Gastrocnemius medialis (tissue), 4 donors: ENCODE measurements at regions of chr12 and their contacts with region 1.

Region 1: GRCh38 chr12:47837190-47838171 is 17.8 kb upstream of the HDAC7 start:
- DNase-seq: peak in 1 of 2 donors; percentile 56
- ATAC-seq: peak; percentile 68 to 84
- H3K4me3 ChIP-seq: no peak overlapping the region
- H3K27ac ChIP-seq: no peak overlapping the region
- H3K4me1 ChIP-seq: peaks cover 17 to 28% of the 10 kb centered on the region in 2 donors
- H3K27me3 ChIP-seq: no peaks in the 10 kb centered on the region
- CTCF ChIP-seq: peak; percentile 90 to 95 (median 92)
- POLR2A ChIP-seq: no peak

Region 2: GRCh38 chr12:47651368-47652254 is 185.9 kb before region 1 on chr12:
- in situ Hi-C with region 1: no loop called
- intact Hi-C with region 1: loop called (anchors 1 kb)
- DNase-seq: peak; percentile 19 to 32
- ATAC-seq: peak; percentile 77 to 85
- H3K4me3 ChIP-seq: peak overlapping the region in 3 of 4 donors; percentile 8 to 13 (median 10)
- H3K27ac ChIP-seq: no peak overlapping the region
- H3K4me1 ChIP-seq: no peaks in the 10 kb centered on the region
- H3K27me3 ChIP-seq: no peaks in the 10 kb centered on the region
- CTCF ChIP-seq: peak; percentile 49 to 74 (median 54)
- POLR2A ChIP-seq: no peak

Region 3: DNA sequence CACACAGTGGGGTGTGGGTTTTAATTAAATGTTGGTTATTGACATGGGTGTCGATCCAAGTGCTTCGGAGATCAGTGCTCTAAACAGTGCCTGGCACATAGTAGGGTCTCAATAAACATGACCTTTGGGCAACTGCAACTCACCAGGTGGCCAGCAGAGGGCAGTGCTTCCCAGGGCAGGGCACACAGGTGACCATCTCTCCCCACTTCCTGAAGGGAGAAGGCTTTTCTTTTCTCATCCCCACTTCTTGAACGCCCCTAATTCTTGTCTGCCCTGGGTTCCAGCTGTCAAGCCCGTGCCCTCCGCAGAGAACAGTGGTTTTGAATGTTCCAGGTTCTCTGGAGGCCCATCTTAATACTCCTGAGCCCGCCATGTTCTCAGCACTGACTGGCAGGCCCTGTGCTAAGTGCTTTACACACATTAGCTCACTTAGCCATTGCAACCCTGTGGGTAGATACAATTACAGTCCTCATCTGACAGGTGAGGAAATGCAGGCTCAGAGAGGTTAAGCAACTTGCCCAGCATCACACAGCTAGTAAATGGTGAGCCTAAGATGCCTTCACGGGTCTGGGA is 95.1 kb before region 1 on chr12:
- in situ Hi-C with region 1: loop called in 2 of 4 experiments (anchors 25 kb)
- intact Hi-C with region 1: loop called (anchors 1 kb)
- DNase-seq: no peak
- ATAC-seq: peak; percentile 20 to 45
- H3K4me3 ChIP-seq: no peak overlapping the region
- H3K27ac ChIP-seq: no peak overlapping the region
- H3K4me1 ChIP-seq: peaks cover 14 to 25% of the 10 kb centered on the region in 2 donors
- H3K27me3 ChIP-seq: no peaks in the 10 kb centered on the region
- CTCF ChIP-seq: peak; percentile 91 to 95 (median 92)
- POLR2A ChIP-seq: no peak

Region 4: DNA sequence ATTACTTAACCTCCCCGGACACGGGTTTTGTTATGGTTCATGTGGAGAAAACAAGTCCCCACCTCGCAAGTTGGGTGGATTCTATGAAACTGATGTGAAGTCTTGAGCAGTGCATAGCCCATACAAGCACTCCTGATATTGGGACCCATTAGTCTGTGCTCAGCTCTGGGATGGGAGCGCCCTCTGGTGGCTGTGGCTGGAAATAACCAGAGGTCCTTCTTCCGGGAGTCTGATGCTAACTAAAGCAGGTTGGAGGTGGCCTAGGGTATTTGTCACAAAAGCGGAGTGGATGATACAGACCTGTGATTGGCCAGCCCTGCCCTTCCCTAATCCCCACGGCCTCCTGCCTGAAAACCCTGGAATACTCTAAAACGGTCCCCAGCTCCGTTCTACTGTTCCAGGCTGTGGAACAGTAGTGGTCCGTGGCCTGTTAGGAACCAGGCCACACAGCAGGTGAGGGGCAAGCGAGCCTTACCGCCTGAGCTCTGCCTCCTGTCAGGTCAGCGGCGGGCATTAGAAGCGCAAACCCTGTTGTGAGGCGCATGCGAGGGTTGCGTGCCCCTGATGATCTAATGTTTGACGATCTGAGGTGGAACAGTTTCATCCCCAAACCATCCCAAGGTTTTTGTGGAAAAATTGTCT is 58.1 kb before region 1 on chr12:
- in situ Hi-C with region 1: loop called in 2 of 4 experiments (anchors 5 to 10 kb)
- intact Hi-C with region 1: no loop called
- DNase-seq: peak; percentile 69 to 81
- ATAC-seq: peak; percentile 74 to 83
- H3K4me3 ChIP-seq: no peak overlapping the region
- H3K27ac ChIP-seq: no peak overlapping the region
- H3K4me1 ChIP-seq: peaks cover 47 to 55% of the 10 kb centered on the region in 2 donors
- H3K27me3 ChIP-seq: no peaks in the 10 kb centered on the region
- CTCF ChIP-seq: peak; percentile 89 to 95 (median 93)
- POLR2A ChIP-seq: no peak

Region 5: GRCh38 chr12:47801170-47801903 is 36.1 kb before region 1 on chr12:
- in situ Hi-C with region 1: no loop called
- intact Hi-C with region 1: loop called (anchors 1 kb)
- DNase-seq: no peak
- ATAC-seq: no peak
- H3K4me3 ChIP-seq: no peak overlapping the region
- H3K27ac ChIP-seq: peak overlapping the region; percentile 33 to 86 (median 82)
- H3K4me1 ChIP-seq: peaks cover 80 to 88% of the 10 kb centered on the region in 2 donors
- H3K27me3 ChIP-seq: no peaks in the 10 kb centered on the region
- CTCF ChIP-seq: no peak
- POLR2A ChIP-seq: no peak

Region 6: DNA sequence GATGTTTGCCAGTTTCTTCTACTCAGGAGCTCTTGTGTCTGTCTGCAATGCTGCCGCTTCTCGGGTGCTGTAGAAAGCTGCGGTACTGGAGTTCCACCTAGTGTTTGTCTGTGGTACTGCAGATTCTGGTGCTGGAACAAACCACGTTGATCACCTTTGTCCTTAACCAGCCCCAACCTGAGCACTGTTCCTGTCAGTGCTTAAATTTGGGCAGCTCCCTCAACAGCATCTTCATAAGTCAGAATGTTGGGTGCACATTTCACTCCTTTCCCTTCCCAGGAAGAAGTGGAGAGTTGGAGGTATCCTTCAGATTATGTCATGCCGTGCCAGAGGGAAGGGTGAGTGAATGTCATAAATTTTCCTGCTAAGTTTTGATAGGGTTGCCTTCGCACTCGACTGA is 781.1 kb after region 1 on chr12:
- in situ Hi-C with region 1: no loop called
- intact Hi-C with region 1: no loop called
- DNase-seq: peak; percentile 32 to 57
- ATAC-seq: peak; percentile 81 to 89
- H3K4me3 ChIP-seq: no peak overlapping the region
- H3K27ac ChIP-seq: no peak overlapping the region
- H3K4me1 ChIP-seq: no peaks in the 10 kb centered on the region
- H3K27me3 ChIP-seq: peaks cover 0 to 12% (median 3%) of the 10 kb centered on the region in 3 donors
- CTCF ChIP-seq: peak; percentile 77 to 96 (median 84)
- POLR2A ChIP-seq: no peak